ENCODE measurements at regions of chr13 and their contacts with region 1.

Region 1: DNA sequence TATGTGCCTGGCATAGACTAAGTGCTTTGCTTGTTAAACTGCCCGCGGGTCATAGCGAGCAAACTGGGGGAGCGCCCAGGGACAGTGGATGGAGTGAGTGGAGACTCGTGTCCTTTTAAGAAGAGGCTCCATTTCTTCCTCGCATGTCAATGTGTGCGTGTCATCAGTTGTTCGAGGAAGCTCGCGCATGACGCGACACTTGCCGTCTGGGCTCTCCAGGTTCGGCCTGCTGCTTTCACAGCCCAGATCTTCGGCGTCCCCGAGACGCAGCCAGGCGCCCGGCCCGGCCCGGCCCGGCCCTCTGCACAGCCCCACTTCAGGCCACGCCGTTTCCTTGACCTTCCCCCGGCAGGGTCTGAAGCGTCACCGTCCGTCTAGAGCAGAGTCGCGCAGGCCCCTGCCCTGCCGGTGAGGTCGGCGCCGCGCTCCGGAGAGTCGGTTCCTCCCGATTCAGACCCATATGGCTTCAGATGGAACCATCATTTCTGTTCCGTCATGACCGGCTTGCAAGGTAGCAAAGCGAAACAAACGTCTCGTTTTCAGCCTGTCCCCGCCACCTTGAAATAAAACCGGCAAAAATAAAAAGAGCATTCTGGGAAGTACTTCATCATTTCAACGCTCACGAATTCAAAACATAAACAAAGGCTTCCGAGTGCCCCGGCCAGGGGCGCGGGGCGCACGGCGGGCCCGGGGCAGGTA is 599 bp upstream of the ARHGEF7 start:
- DNase-seq: peak in 1 of 2 donors; percentile 89
- H3K4me3 ChIP-seq: peak overlapping the region; percentile 80 to 86
- H3K27ac ChIP-seq: peak overlapping the region; percentile 89 to 95
- H3K4me1 ChIP-seq: peaks cover 3 to 25% of the 10 kb centered on the region in 2 donors
- H3K27me3 ChIP-seq: no peaks in the 10 kb centered on the region
- CTCF ChIP-seq: no peak

Region 2: DNA sequence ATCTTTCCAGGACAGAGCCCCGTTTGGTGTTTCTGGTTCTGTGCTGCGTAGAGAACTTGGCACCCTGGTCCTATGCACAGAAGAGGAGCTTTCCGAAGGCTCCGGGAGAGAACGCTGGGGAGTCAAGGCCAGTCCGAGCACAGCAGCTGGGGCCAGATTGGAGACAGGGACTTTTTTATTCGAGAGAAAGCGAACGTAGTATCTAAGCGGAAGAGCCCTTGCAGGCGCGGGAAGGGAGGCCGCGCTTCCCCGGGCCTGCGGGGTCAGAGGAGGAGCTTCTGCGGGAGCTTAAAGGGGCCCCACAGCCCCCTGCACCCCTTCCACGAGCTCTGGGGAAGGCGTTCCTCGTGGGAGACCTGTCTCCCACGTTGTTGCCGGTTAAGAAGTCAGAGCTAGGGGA is 48.0 kb before region 1 on chr13:
- intact Hi-C with region 1: loop called (anchors 5 kb)
- DNase-seq: no peak
- H3K4me3 ChIP-seq: no peak overlapping the region
- H3K27ac ChIP-seq: no peak overlapping the region
- H3K4me1 ChIP-seq: no peaks in the 10 kb centered on the region
- H3K27me3 ChIP-seq: no peaks in the 10 kb centered on the region
- CTCF ChIP-seq: no peak

Region 3: DNA sequence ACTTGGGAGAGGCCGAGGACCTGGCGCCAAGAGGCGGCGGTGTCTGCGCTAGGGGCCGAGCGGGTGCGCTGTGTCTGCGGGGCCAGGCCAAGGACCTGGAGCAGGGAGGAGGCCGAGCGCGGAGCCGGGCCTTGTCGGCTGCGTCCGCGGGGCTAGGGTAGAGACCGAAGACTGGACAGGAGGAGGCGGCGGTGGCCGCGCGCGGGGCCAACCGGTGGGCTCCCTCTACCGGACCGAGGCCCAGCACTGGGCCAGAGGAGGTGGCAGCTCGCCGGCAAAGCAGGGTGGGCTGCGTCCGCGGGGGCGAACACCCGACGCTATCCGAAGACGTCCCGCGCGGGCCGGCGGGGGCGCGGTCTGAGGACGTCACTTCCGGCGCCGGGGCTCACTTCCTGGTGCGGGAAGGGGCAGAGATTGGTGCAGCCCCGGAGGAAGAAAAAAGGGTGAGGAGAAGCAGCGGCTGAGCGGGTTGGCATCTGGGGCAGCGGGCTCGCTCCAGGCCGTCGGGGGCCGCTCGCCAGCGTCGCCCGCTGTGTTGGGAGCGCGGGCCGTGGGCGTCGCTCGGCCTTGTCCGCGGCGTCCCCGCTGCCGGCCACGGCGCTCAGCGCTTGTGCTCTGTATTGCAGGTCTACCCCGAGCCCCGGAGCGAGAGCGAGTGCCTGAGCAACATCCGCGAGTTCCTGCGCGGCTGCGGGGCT is 38.9 kb after region 1 on chr13:
- intact Hi-C with region 1: loop called (anchors 1 kb)
- DNase-seq: peak; percentile 64 to 96
- H3K4me3 ChIP-seq: peak overlapping the region; percentile 66 to 89
- H3K27ac ChIP-seq: peak overlapping the region; percentile 99
- H3K4me1 ChIP-seq: peaks cover 2 to 36% of the 10 kb centered on the region in 2 donors
- H3K27me3 ChIP-seq: no peaks in the 10 kb centered on the region
- CTCF ChIP-seq: peak in 2 of 3 experiments; percentile 7 to 33

Region 4: DNA sequence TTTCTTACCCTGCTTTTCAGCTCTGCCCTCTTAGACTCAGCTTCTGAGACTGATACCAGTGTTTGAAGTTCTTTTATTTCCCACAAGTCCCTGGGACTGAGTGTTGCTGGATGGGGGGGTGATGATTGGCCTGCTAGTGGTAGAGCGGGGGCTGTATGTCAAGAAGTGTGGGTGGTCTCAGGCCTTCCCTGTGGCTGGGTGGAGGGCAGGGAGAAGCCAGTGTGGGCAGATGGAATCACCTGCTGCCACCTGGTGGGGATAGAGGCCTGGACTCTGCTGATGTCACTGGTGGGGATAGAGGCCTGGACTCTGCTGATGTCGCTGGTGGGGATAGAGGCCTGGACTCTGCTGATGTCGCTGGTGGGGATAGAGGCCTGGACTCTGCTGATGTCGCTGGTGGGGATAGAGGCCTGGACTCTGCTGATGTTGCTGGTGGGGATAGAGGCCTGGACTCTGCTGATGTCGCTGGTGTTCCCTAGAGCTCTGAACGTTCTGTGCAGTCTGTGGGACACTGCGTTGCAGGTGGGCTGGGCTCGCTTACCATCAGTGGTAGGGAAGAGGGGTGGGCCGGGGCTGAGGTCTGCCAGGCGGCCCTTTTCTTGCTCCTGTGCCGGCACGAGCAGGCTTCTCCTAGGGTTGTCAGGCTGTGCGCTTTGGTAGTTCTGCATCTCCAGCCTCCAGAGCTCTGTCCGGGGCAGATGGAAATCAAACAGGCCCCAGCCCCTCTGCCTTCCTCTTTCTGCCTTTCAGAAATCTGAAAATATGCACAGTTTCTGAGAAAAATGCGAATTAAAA is 101.9 kb after region 1 on chr13:
- intact Hi-C with region 1: loop called (anchors 2 kb)
- DNase-seq: peak in 1 of 2 donors; percentile 69
- H3K4me3 ChIP-seq: peak overlapping the region in 1 of 2 donors; percentile 24
- H3K27ac ChIP-seq: peak overlapping the region; percentile 77 to 82
- H3K4me1 ChIP-seq: peaks cover 12 to 69% of the 10 kb centered on the region in 2 donors
- H3K27me3 ChIP-seq: no peaks in the 10 kb centered on the region
- CTCF ChIP-seq: peak; percentile 35 to 74 (median 49)

Region 5: DNA sequence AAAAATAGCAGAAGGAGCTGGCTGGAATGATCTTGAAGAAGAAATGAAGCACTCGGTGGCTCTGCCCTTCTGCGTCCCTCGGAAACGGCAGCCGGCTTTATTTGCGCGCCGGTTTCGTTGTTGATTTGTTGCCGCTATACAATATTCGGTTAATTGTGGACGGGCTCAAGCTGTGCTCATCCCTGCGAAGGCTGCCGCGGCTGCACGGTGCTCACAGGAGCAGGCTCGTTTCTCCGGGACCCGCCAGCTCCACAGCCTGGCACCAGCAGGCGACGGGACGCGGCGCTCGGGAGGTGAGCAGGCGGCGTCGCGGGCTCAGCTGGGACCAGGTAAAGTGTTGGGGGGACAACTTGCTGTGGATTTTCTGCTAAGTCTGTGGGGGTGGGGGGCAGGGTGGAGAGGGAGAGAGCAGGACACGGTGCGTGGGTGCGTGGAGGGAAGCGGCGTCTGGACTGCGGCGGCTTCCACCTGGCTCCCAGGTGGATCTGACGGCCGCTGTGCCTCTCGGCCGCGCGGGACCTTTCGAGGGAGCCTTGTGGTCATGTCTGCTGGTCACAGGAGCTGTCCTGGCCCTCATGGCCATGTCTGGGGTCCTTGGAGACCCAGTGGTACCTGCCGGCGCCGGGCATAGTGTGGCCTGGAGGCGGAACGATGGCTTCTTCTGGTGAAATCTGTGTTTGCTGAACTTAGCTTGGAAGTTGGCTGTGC is 296.8 kb after region 1 on chr13:
- intact Hi-C with region 1: no loop called
- DNase-seq: no peak
- H3K4me3 ChIP-seq: no peak overlapping the region
- H3K27ac ChIP-seq: no peak overlapping the region
- H3K4me1 ChIP-seq: no peaks in the 10 kb centered on the region
- H3K27me3 ChIP-seq: no peaks in the 10 kb centered on the region
- CTCF ChIP-seq: no peak

Region 6: DNA sequence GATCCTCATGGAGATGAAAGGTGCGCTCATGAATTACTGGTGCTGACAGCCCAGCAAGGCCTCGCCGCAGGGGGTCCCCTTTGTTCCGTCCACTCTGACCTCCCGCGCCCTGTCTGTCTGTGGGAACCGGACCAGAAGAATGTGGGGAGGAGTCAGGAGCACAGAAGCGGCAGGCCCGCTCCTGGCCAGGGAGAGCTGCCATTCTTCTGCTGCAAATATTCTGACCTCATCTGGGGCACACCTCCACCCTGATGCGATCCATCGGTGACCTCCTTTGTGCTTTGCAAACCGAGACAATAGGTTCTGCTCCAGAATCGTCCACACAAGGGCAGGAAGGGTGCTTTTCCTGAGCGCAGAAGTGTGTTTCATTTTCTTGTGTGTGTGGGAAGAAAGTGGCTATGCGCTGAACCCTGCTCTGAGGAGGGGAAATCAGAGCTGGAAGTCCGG is 1090.4 kb after region 1 on chr13:
- intact Hi-C with region 1: no loop called
- DNase-seq: no peak
- H3K4me3 ChIP-seq: no peak overlapping the region
- H3K27ac ChIP-seq: no peak overlapping the region
- H3K4me1 ChIP-seq: no peaks in the 10 kb centered on the region
- H3K27me3 ChIP-seq: no peaks in the 10 kb centered on the region
- CTCF ChIP-seq: no peak

Measured in ascending aorta (tissue), 2 donors.